HCT116 (cell line): ENCODE measurements at regions of chr3 and their contacts with region 1.

Region 1: GRCh38 chr3:150546226-150547044 is at the starts of genes EIF2A and SERP1:
- DNase-seq: peak; percentile 98
- ATAC-seq: peak; percentile 91
- H3K4me3 ChIP-seq: peak within 1 kb of the TSS; percentile 94 to 96
- H3K27ac ChIP-seq: peak within 1 kb of the TSS; percentile 90
- H3K4me1 ChIP-seq: peaks cover 5 to 20% of the 10 kb centered on the region in 2 experiments
- H3K27me3 ChIP-seq: no peaks in the 10 kb centered on the region
- CTCF ChIP-seq: no peak
- POLR2A ChIP-seq: peak; percentile 82
- RAD21 ChIP-seq: no peak
- total RNA-seq, gene EIF2A: 126 TPM
- total RNA-seq, gene SERP1: 69.1 TPM

Region 2: DNA sequence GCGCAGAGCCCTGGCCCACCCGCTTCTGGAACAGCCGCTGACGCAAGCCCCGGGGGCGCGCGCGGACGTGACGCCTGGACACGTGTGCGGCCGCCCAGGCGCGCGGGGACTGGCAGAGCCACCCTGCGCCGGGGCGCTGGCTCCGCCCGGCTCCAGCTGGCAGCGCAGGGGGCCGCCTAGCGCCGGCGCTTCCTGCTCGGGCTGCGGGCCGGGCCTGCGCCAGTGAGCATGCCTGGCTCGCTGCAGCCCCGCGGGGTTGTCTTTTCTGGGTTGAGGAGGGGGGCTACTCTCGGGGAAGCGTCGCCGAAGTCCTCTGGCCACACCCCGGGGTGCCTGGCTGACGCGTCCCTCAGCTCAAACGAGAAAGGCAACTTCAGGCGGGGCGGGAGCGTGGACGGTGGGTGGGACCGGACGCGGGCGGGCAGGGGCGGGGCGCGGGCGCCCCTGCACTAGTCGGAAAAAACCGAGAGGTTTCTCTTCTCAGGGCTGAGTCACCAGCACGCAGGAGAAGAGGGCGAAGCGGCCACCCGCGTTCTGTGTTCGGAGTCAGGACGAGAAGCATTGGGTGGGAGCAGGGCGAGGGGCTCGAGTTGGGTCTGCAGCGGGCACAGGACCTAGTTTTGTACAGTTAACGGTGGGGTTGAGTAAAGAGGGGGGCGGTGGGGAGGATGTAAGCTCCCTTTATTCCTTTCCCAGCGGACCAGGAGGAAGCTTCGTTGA is 216.8 kb after region 1 on chr3 and contains the start of gene SIAH2:
- CTCF ChIA-PET with region 1: no interaction called
- POLR2A ChIA-PET with region 1: interaction called, 3 read pairs
- RAD21 ChIA-PET with region 1: no interaction called
- intact Hi-C with region 1: loop called (anchors 5 kb)
- DNase-seq: peak; percentile 89
- ATAC-seq: peak; percentile 81
- H3K4me3 ChIP-seq: peak within 1 kb of the TSS; percentile 72 to 91
- H3K27ac ChIP-seq: peak within 1 kb of the TSS; percentile 92
- H3K4me1 ChIP-seq: peaks cover 31 to 54% of the 10 kb centered on the region in 2 experiments
- H3K27me3 ChIP-seq: no peaks in the 10 kb centered on the region
- CTCF ChIP-seq: no peak
- POLR2A ChIP-seq: peak; percentile 75
- RAD21 ChIP-seq: no peak
- total RNA-seq, gene SIAH2: 39.9 TPM

Region 3: DNA sequence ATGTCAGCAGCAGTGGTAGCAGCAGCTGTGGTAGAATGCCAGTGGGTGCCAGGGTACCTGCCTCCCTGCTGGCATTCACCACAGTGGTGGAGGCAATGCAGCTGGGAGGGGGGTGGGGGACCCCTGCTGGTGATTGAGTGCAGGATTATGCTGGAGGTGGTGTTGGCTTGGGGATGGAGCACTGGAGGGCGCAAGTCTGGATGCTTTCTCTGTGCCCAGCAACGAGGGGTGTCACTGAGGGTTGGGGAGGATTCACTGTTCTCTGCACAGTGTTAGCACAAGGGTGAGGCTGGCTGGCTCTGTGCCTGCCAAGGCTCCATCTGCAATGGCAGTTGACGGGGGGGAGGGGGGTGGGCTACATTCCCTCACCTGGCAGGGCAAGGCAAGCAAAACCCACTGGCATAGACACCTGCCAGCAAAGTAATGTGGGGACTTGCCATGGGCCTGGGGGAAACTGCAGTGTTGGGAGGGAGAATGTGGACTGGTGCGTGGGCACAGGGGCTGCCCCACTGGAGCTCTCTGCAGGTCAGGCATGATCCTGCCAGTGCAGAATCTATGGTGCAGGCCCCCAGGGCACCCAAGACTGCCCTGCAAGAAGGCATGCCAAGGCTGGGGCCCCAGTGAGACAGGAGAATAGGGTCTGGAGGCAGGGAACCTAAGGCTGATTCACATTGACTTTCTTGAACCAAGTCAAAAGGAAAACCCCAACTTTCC is 294.5 kb after region 1 on chr3:
- CTCF ChIA-PET with region 1: no interaction called
- POLR2A ChIA-PET with region 1: no interaction called
- RAD21 ChIA-PET with region 1: no interaction called
- intact Hi-C with region 1: no loop called
- DNase-seq: no peak
- ATAC-seq: peak; percentile 71
- H3K4me3 ChIP-seq: no peak overlapping the region
- H3K27ac ChIP-seq: no peak overlapping the region
- H3K4me1 ChIP-seq: peaks cover 0 to 11% of the 10 kb centered on the region in 2 experiments; a peak in 2 of 4 replicates
- H3K27me3 ChIP-seq: no peaks in the 10 kb centered on the region
- CTCF ChIP-seq: peak; percentile 35 to 60 (median 36); a peak in 4 of 6 replicates
- POLR2A ChIP-seq: no peak
- RAD21 ChIP-seq: peak; percentile 34; the same call in 1 of the 2 replicates